ENCODE measurements at regions of chr1 and their contacts with region 1.

Region 1: DNA sequence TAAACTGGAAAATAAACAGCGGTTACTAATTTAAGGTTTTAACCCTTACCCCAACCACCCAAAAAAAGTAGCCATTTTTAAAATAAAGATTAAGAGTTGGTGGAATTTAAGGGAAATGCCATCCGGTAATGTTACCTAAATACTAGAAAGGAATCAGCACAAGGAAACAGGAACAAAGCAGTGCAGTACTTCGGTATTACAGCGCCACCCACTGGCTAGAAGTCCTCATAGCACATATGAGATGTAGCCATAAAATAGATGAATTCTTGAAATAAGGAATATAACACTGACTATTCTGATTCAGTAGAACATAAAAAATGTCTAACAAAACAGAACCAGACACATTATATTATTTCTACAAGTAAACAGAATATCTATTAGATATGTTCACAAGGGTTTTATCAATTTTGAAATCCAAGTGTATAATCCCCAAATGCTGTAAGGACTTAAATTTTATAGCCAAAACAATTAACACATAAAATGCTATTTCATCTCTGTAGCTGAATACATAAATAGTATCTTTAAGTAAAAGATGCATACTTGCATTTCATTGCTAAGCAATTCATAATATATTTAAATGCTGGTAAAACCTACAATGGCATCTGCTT is 58.8 kb downstream of the FRRS1 start:
- DNase-seq: no peak

Region 2: GRCh38 chr1:98794196-98794886 is 913.3 kb before region 1 on chr1:
- intact Hi-C with region 1: loop called (anchors 10 kb)
- DNase-seq: no peak

Region 3: GRCh38 chr1:99180343-99180808 is 527.3 kb before region 1 on chr1:
- intact Hi-C with region 1: loop called (anchors 1 kb)
- DNase-seq: no peak

Region 4: DNA sequence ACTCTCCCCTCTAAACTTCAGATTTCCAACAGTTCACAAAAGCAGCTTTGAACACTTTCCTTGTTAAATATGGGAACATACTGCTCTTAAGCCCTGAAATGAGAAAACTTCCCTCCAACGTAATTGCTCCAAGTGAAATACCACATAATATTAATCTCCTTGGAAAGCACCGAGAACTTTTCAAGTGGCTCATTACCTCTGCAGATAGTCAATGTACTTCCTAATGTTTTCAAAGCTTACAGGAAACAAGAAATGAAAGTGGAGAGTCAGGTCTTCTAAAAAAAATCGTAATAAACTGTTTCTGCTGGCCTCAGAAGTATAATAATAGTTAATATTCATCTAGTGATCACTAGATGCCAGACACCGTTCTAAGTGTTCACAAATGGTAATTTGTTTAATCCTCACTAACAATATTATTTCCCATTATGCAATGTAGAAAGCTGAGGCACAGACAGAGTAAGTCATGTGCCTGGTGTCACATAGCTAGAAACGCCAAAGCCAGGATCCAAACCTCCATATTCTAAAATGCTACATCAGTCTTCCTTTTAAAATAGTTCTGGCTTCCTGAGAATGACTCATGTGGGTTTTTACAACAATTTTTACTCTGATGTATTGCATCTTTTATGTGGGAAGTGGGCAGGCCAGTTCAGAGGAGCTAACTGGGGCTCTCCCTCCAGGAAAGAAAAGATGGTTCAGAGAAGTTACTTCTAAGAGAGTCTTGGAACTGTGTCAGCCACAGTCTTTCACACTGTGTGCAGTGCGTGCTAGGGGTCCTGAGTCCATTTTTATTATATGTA is 266.1 kb before region 1 on chr1:
- intact Hi-C with region 1: no loop called
- DNase-seq: no peak

Measured in cardiac septum (tissue), 1 donor.